GM10248 (cell line): ENCODE measurements at regions of chr3 and their contacts with region 1.

Region 1: DNA sequence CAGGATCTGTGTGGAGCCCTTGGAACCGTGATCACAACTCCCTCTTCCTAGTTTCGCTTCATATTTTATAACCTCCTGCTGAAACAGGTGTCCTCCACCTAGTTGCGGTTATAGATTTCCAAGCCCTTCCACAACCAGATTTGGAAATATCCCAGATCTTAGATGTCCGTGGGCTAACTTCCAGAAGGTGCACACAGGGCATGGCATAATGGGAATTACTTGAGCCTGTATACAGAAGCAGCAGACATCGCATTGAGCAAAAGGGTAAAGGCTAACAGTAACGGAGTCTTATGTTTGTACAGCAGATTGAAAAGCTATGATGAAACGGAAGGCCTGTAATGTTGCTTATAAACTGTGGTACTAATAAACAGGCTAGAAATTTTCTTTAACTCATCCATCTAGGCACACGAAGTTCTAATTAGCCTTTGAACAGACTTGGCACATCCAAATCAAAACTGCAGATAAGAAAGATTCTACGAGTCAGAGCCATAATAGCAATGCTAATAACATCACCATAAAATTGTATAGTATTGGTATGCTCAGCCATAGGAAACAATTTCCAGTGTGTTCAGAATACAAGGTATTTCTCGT is 1.2 kb upstream of the USF3 start:
- DNase-seq: peak; percentile 15
- CTCF ChIP-seq: no peak

Region 2: DNA sequence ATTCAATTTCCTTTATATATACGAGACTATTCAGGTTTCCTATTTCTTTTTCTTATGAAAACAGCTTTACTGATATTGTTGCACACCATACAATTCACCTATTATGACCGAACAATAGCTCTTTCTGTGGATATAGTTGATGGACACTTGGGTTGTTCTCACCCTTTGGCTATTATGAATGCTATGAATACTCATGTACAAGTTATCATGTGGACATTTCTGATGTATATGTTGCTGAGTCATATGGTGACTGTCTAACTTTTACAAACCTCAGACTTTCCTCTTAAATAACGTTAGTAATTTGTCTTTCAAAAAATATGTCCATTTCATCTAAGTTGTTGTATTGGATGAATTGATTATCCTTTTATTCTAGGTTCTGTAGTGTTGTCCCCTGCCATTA is 14.5 kb after region 1 on chr3:
- CTCF ChIA-PET with region 1: interaction called, 10 read pairs
- POLR2A ChIA-PET with region 1: no interaction called
- DNase-seq: no peak
- CTCF ChIP-seq: no peak

Region 3: DNA sequence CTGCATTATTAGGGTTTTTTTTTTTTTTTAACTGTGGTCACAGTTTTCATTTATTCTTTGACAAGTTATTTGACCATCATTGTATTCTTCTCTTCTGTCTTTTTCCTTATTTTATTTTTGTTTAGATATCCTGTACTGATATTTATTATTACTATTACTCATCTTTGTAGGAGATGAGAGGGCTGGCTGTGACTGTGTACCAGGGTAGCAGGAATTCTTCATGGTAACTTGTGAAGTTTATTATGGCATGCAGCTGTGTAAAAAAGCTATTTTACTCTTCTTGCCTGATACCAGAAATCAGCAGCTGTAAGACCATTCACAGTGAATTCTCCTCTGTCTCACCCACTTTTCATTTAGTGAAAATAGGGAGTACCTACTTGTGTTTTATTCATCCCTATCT is 93.8 kb after region 1 on chr3:
- CTCF ChIA-PET with region 1: no interaction called
- POLR2A ChIA-PET with region 1: no interaction called
- DNase-seq: no peak
- CTCF ChIP-seq: no peak

Region 4: DNA sequence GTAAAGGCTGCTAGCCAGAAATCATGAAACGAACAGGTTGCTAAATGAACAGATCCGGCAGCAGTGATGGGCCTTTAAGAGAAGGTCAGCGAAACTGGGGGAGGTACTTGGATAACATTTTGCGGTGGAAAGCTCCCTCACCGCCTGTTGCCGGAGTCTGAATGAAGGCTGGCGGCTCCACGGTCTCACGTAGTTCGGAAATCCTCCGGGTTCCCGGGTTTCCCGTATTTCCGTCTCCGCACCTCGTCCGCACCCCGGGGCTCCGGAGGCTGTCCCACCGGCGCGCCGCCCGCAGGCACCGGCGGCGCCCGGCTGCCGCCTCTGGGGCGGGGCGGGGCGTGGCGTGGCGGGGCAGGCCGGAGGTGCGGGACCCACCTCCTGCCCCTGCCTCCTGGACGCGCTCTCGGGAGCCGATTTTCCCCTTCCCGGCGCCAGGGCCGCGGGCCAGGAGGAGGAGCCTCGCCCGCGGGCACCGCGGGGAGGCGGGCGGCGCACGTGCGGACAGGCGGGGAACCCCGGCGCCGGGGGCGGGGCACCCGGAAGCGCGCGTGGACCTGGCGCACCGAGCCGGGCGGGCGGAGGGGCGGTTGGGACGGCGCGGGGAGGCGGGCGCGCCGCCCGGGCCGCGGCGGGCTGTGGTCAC is 249.9 kb after region 1 on chr3 and contains the start of gene ZDHHC23:
- CTCF ChIA-PET with region 1: no interaction called
- POLR2A ChIA-PET with region 1: no interaction called
- DNase-seq: peak; percentile 80
- CTCF ChIP-seq: no peak